MCF 10A (cell line): ENCODE measurements at regions of chr10 and their contacts with region 1.

Region 1: DNA sequence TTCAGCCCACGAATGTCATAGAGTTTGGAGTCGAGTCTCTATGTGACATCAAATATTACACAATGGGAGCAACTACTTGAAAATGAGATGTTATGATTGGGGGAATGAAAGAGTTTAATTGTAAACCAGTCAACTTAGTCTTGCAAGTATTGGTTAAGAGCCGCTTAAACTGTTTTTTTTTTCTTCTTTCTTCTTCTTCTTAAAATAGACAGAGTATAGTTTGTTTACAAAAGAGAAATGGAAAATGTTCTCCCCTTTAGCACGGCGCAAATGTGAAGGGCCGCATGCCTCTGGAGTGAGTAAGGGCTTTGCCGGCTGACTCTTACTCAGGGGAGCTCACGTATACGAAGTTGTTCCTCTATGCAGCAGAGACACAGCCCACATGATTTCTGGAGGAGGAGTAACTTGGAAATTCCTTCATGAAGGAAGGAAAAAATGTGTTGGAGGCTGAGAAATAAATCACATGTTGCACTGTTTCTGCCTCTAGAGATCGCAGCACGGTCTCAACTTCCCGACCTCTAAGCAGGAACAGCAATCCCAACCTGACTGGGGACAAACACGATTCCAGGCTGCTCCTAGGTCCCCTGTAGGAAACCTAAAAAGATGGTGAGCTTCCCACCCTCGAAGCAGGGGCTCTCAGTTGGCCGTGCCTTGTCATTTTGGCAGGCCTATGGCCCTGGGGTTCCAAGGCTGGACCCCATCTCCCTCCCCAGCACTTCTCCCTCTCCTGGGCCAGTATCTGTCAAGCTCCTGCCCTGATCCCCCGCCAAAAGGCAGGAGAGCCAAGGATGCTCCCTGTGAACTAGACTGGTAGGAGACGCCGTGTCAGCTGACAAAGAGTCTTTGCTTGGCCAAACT is 44.8 kb downstream of the MYOF start:
- DNase-seq: peak; percentile 96
- H3K4me3 Mint-ChIP-seq: peak overlapping the region; percentile 70
- H3K27ac Mint-ChIP-seq: peak overlapping the region; percentile 98
- H3K4me1 Mint-ChIP-seq: peaks cover 65% of the 10 kb centered on the region
- H3K27me3 Mint-ChIP-seq: no peaks in the 10 kb centered on the region
- CTCF ChIP-seq: no peak

Region 2: DNA sequence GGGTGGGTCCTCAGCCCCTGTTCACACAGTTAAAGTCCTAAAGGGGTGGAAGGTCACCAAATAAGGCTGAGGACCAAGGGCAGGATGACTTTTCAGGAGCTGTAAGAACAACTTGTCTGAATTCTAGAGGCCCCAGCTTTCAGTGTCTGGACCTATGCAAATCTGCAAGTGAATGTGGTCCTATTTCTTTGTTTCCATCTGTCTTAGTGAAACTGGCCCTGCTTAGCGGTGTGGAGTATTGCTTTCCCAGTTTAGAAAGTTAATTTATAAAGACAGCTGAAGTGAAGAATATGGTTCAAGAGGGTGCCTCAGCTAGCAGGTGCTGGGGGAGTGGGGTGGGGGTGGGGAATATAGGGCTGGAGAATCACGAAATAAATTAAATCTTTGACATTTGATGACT is 707.4 kb before region 1 on chr10:
- CTCF ChIA-PET with region 1: no interaction called
- POLR2A ChIA-PET with region 1: no interaction called
- intact Hi-C with region 1: no loop called
- DNase-seq: no peak
- H3K4me3 Mint-ChIP-seq: no peak overlapping the region
- H3K27ac Mint-ChIP-seq: no peak overlapping the region
- H3K4me1 Mint-ChIP-seq: no peaks in the 10 kb centered on the region
- H3K27me3 Mint-ChIP-seq: peaks cover 13% of the 10 kb centered on the region
- CTCF ChIP-seq: no peak

Region 3: DNA sequence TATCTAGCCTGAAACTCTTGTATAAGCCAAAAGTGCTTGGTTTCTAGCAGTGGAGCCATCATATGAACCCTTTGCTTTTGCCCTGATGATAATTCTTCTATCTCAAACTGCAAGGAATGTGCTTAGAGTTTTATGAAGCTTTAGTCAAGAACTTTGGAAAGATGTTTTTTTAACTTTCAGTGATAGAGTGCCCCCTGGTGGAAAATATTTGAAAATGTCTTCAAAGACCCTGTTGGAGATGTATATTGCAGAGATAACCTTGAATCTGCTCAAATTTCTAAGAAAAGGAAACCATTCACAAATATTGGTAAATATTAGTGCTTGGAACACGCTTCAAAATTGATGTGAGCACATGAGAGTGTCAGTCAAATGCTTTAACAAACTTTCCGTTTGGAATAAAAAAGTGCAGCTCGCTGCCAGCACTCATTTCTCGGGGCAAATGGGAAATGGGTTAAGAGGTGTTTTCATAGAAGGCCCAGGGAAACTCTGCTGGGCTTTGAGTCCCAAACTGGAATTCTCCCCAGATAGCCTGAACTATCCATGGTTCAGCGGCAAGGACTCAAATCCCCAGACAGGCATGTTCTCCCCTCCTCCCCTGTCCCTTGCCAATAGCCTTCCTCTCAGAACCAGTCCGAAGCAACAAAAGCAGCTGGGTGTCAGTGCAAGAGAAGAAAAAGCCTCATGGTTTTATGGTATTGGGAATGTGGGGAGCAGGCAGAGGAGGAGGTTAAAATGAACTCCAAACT is 84.5 kb before region 1 on chr10:
- CTCF ChIA-PET with region 1: no interaction called
- POLR2A ChIA-PET with region 1: no interaction called
- intact Hi-C with region 1: no loop called
- DNase-seq: peak; percentile 46
- H3K4me3 Mint-ChIP-seq: no peak overlapping the region
- H3K27ac Mint-ChIP-seq: no peak overlapping the region
- H3K4me1 Mint-ChIP-seq: no peaks in the 10 kb centered on the region
- H3K27me3 Mint-ChIP-seq: no peaks in the 10 kb centered on the region
- CTCF ChIP-seq: peak; percentile 51

Region 4: DNA sequence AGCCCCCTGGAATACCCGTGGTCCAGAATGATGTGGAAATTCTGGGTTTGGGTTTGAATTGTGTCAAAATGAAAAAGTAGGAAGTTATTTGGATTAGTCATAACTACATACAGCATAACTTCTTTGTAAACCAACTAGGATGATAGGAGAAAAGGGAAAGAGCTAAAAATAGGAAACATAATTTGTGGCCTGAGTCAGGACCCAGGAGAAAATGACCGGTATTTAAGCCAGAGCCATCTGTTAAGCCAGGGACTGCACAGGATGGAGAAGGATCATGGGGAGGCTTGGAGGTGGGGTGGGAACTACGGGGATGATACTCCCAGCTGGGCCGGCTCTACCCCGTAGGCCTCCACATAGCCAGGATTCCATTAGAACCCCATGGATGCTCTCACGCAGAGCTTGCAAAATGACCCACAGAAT is 53.7 kb before region 1 on chr10:
- CTCF ChIA-PET with region 1: interaction called, 102 read pairs
- POLR2A ChIA-PET with region 1: interaction called, 49 read pairs
- intact Hi-C with region 1: loop called (anchors 2 kb)
- DNase-seq: peak; percentile 49
- H3K4me3 Mint-ChIP-seq: peak overlapping the region; percentile 45
- H3K27ac Mint-ChIP-seq: peak overlapping the region; percentile 85
- H3K4me1 Mint-ChIP-seq: peaks cover 41% of the 10 kb centered on the region
- H3K27me3 Mint-ChIP-seq: no peaks in the 10 kb centered on the region
- CTCF ChIP-seq: no peak

Region 5: GRCh38 chr10:93458821-93459257 is 21.5 kb after region 1 on chr10:
- CTCF ChIA-PET with region 1: interaction called, 10 read pairs
- POLR2A ChIA-PET with region 1: interaction called, 2,342 read pairs
- intact Hi-C with region 1: no loop called
- DNase-seq: peak; percentile 94
- H3K4me3 Mint-ChIP-seq: peak overlapping the region; percentile 67
- H3K27ac Mint-ChIP-seq: peak overlapping the region; percentile 98
- H3K4me1 Mint-ChIP-seq: peaks cover 41% of the 10 kb centered on the region
- H3K27me3 Mint-ChIP-seq: no peaks in the 10 kb centered on the region
- CTCF ChIP-seq: no peak

Region 6: GRCh38 chr10:93471110-93471651 is 33.9 kb after region 1 on chr10:
- CTCF ChIA-PET with region 1: interaction called, 12 read pairs
- POLR2A ChIA-PET with region 1: interaction called, 2,342 read pairs
- intact Hi-C with region 1: loop called (anchors 1 kb)
- DNase-seq: peak; percentile 87
- H3K4me3 Mint-ChIP-seq: peak overlapping the region; percentile 44
- H3K27ac Mint-ChIP-seq: peak overlapping the region; percentile 85
- H3K4me1 Mint-ChIP-seq: peaks cover 50% of the 10 kb centered on the region
- H3K27me3 Mint-ChIP-seq: no peaks in the 10 kb centered on the region
- CTCF ChIP-seq: no peak

Region 7: DNA sequence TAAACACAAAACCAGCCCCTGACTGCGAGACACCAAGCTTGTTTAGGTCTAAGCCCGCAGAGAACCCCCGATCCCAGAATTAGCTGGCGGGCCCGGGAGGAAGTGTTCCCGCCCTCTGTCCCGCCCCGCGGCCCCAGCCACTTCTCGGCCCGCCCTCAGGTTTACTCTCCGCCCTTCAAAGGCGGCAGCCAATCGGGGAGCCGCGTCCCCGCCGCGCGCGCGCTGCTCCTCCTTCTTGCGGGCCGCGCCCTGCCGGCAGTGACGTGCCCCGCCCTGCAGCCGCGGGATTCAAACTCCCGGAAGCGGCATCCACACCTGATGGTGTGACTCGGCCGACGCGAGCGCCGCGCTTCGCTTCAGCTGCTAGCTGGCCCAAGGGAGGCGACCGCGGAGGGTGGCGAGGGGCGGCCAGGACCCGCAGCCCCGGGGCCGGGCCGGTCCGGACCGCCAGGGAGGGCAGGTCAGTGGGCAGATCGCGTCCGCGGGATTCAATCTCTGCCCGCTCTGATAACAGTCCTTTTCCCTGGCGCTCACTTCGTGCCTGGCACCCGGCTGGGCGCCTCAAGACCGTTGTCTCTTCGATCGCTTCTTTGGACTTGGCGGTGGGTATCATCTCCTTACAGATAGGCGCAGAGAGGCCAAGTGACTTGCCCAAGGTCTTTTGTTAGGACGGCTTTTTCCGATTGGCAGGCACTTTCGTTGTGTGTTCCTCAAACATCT is 59.2 kb after region 1 on chr10 and contains the start of gene CEP55:
- CTCF ChIA-PET with region 1: interaction called, 3 read pairs
- POLR2A ChIA-PET with region 1: interaction called, 10 read pairs
- intact Hi-C with region 1: no loop called
- DNase-seq: peak; percentile 94
- H3K4me3 Mint-ChIP-seq: peak within 1 kb of the TSS; percentile 84
- H3K27ac Mint-ChIP-seq: peak within 1 kb of the TSS; percentile 73
- H3K4me1 Mint-ChIP-seq: peaks cover 24% of the 10 kb centered on the region
- H3K27me3 Mint-ChIP-seq: no peaks in the 10 kb centered on the region
- CTCF ChIP-seq: no peak
- total RNA-seq, gene CEP55: 25.2 and 39.4 TPM in 2 replicates

Region 8: GRCh38 chr10:93535293-93535692 is 98.0 kb after region 1 on chr10:
- CTCF ChIA-PET with region 1: no interaction called
- POLR2A ChIA-PET with region 1: no interaction called
- intact Hi-C with region 1: no loop called
- DNase-seq: no peak
- H3K4me3 Mint-ChIP-seq: no peak overlapping the region
- H3K27ac Mint-ChIP-seq: no peak overlapping the region
- H3K4me1 Mint-ChIP-seq: no peaks in the 10 kb centered on the region
- H3K27me3 Mint-ChIP-seq: peaks cover 42% of the 10 kb centered on the region
- CTCF ChIP-seq: no peak

Region 9: GRCh38 chr10:93615576-93616235 is 178.4 kb after region 1 on chr10:
- CTCF ChIA-PET with region 1: no interaction called
- POLR2A ChIA-PET with region 1: no interaction called
- intact Hi-C with region 1: no loop called
- DNase-seq: no peak
- H3K4me3 Mint-ChIP-seq: no peak overlapping the region
- H3K27ac Mint-ChIP-seq: no peak overlapping the region
- H3K4me1 Mint-ChIP-seq: no peaks in the 10 kb centered on the region
- H3K27me3 Mint-ChIP-seq: peaks cover 16% of the 10 kb centered on the region
- CTCF ChIP-seq: no peak